Body of pancreas (tissue), 4 donors: ENCODE measurements at regions of chr17 and their contacts with region 1.

Region 1: GRCh38 chr17:6995431-6996255 is at the start of gene ALOX12:
- DNase-seq: no peak
- ATAC-seq: peak; percentile 65
- H3K4me3 ChIP-seq: no peak within 1 kb of the TSS
- H3K27ac ChIP-seq: no peak within 1 kb of the TSS
- H3K4me1 ChIP-seq: peaks cover 11% of the 10 kb centered on the region
- H3K27me3 ChIP-seq: no peaks in the 10 kb centered on the region
- CTCF ChIP-seq: no peak
- POLR2A ChIP-seq: no peak
- total RNA-seq, gene ALOX12: not detected

Region 2: DNA sequence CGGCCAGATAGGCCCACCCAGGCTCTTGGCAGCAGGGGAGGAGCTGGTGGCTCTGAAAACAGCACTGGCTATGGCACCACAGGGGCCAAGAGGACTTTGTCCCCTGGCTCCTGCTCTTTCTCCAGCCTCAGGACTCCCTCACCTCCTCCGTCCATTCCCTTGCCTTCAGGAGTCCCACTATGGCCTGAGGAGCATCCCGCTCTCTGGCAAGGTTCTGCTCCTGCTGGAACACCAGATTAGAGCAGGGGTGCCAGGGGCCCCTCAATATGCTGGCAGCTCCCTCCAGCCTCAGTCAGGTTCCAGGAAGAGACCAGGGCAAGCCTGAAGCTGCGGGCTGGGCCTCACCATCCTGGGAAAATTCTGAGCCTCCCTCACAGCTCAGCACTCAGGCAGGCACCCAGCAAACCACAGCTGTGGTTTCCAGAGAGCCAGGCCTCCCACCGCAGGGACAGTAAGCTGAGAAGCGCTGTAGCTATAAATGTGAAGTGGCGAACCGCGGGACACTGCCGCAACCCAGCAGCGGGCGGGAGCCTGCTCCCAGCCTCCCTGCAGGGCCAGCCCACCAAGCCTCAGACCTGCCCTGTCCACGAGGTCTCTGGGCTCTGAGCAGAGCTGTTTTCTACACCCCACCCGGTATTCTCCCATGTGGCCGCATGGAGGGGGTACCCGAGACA is 318.3 kb before region 1 on chr17:
- intact Hi-C with region 1: loop called (anchors 10 kb)
- DNase-seq: peak in 1 of 4 donors; percentile 30
- ATAC-seq: no peak
- H3K4me3 ChIP-seq: no peak overlapping the region
- H3K27ac ChIP-seq: no peak overlapping the region
- H3K4me1 ChIP-seq: no peaks in the 10 kb centered on the region
- H3K27me3 ChIP-seq: no peaks in the 10 kb centered on the region
- CTCF ChIP-seq: no peak
- POLR2A ChIP-seq: no peak